ENCODE measurements at regions of chr7 and their contacts with region 1.

Region 1: GRCh38 chr7:39623732-39624441 is 515 bp downstream of the RALA start:
- DNase-seq: peak; percentile 54
- H3K27ac ChIP-seq: peak overlapping the region; percentile 87
- CTCF ChIP-seq: no peak

Region 2: GRCh38 chr7:39580149-39580874 is 43.6 kb before region 1 on chr7:
- CTCF ChIA-PET with region 1: interaction called, 11 read pairs
- POLR2A ChIA-PET with region 1: no interaction called
- DNase-seq: peak; percentile 78
- H3K27ac ChIP-seq: no peak overlapping the region
- CTCF ChIP-seq: peak; percentile 90